Activated CD8-positive, alpha-beta T cell treated with anti-CD3 and anti-CD28 coated beads, Interleukin-2, amount 10 ng/mL, durations not matched to agents 7 days and 5 days (primary cell): ENCODE measurements at regions of chr15 and their contacts with region 1.

Region 1: DNA sequence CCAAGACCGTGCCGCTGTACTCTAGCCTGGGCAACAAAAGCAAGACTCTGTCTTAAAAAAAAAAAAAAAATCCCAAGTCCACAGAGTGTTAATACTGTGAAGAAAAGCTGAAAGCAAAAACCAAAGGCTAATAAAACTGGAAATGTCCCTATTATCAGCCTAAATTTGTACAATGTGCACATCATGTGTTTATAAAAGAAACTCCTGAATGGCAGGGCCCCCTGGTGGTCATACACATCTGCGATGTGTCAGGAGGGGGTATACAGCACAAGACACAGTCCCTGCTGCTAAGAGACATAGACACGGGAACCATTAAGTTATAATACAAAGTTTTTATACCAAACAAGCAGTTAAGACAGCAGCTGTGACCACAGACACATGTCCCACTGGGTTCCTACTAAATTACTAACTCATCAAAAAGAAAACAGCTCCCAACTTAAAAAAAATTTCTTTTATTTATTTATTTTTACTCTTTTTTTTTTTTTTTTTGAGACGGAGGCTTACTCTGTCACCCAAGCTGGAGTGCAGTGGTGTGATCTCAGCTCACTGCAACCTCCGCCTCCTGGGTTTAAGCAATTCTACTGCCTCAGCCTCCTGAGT is 31.0 kb downstream of the IDH2 start:
- DNase-seq: peak; percentile 90
- ATAC-seq: peak; percentile 86
- H3K4me3 Mint-ChIP-seq: no peak overlapping the region
- H3K27ac Mint-ChIP-seq: no peak overlapping the region
- H3K4me1 Mint-ChIP-seq: peaks cover 10% of the 10 kb centered on the region
- H3K27me3 Mint-ChIP-seq: no peaks in the 10 kb centered on the region

Region 2: GRCh38 chr15:89760303-89761008 is 310.9 kb before region 1 on chr15:
- CTCF ChIA-PET with region 1: interaction called, 14 read pairs
- POLR2A ChIA-PET with region 1: no interaction called
- DNase-seq: peak; percentile 76
- ATAC-seq: peak; percentile 84
- H3K4me3 Mint-ChIP-seq: no peak overlapping the region
- H3K27ac Mint-ChIP-seq: no peak overlapping the region
- H3K4me1 Mint-ChIP-seq: peaks cover 5% of the 10 kb centered on the region
- H3K27me3 Mint-ChIP-seq: peaks cover 8% of the 10 kb centered on the region

Region 3: GRCh38 chr15:89893696-89894455 is 177.4 kb before region 1 on chr15 and contains the start of gene AP3S2:
- CTCF ChIA-PET with region 1: interaction called, 40 read pairs
- POLR2A ChIA-PET with region 1: interaction called, 4 read pairs
- DNase-seq: peak; percentile 91
- ATAC-seq: peak; percentile 97
- H3K4me3 Mint-ChIP-seq: peak within 1 kb of the TSS; percentile 92
- H3K27ac Mint-ChIP-seq: peak within 1 kb of the TSS; percentile 92
- H3K4me1 Mint-ChIP-seq: peaks cover 35% of the 10 kb centered on the region
- H3K27me3 Mint-ChIP-seq: peaks cover 2% of the 10 kb centered on the region
- total RNA-seq, gene AP3S2: 24.7 to 25.5 TPM

Region 4: DNA sequence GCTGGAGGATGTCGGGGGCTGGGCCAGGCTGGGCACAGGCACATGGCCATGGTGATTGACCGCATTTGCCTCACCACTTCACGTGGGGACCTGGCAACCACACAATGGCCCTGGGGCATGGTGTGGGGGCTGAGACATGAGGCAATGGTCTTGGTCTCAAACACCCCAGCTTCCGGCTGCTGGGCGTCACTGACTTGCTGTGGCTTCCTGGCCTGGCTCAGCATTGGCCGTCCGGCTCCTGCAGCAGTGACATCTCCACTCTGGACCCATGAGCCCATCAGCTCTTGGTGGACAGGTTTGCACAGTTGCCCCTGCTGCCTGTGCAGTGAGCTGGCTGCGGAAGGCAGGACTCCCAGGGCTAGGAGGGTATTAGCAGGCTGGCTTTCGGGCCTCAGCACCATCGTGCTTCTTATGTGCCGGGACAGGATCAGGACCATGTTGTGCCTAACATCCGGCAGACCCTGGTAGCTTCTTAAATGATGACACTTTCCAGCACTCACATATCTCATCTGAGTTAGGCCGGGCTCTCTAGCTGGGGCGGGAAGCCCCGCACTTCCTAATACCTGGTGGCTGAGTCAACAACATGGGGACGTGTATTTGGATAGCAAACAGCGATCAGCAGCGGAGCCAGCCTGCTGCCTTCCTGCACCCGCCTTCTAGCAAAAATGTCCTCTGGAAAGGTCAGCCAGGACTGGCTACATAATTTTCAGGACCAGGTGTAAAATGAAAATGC is 36.0 kb before region 1 on chr15:
- CTCF ChIA-PET with region 1: interaction called, 19 read pairs
- POLR2A ChIA-PET with region 1: interaction called, 4 read pairs
- DNase-seq: no peak
- ATAC-seq: no peak
- H3K4me3 Mint-ChIP-seq: peak overlapping the region; percentile 48
- H3K27ac Mint-ChIP-seq: peak overlapping the region; percentile 81
- H3K4me1 Mint-ChIP-seq: peaks cover 92% of the 10 kb centered on the region
- H3K27me3 Mint-ChIP-seq: no peaks in the 10 kb centered on the region

Region 5: GRCh38 chr15:90059208-90059985 is 11.9 kb before region 1 on chr15:
- CTCF ChIA-PET with region 1: interaction called, 13 read pairs
- POLR2A ChIA-PET with region 1: interaction called, 4 read pairs
- DNase-seq: peak; percentile 82
- ATAC-seq: peak; percentile 94
- H3K4me3 Mint-ChIP-seq: peak overlapping the region; percentile 45
- H3K27ac Mint-ChIP-seq: peak overlapping the region; percentile 84
- H3K4me1 Mint-ChIP-seq: peaks cover 54% of the 10 kb centered on the region
- H3K27me3 Mint-ChIP-seq: no peaks in the 10 kb centered on the region

Region 6: GRCh38 chr15:90086868-90087268 is 15.6 kb after region 1 on chr15:
- CTCF ChIA-PET with region 1: interaction called, 12 read pairs
- POLR2A ChIA-PET with region 1: no interaction called
- DNase-seq: peak; percentile 70
- ATAC-seq: peak; percentile 73
- H3K4me3 Mint-ChIP-seq: no peak overlapping the region
- H3K27ac Mint-ChIP-seq: peak overlapping the region; percentile 63
- H3K4me1 Mint-ChIP-seq: peaks cover 15% of the 10 kb centered on the region
- H3K27me3 Mint-ChIP-seq: no peaks in the 10 kb centered on the region